Caco-2 (cell line): ENCODE measurements at regions of chr10 and their contacts with region 1.

Region 1: GRCh38 chr10:11874542-11875177 is 51.5 kb downstream of the PROSER2 start:
- DNase-seq: peak; percentile 95
- H3K4me3 ChIP-seq: peak overlapping the region; percentile 29
- H3K4me3 Mint-ChIP-seq: peak overlapping the region; percentile 72
- H3K27ac Mint-ChIP-seq: peak overlapping the region; percentile 97
- H3K4me1 ChIP-seq: peaks cover 59% of the 10 kb centered on the region
- H3K4me1 Mint-ChIP-seq: peaks cover 67% of the 10 kb centered on the region
- H3K27me3 ChIP-seq: no peaks in the 10 kb centered on the region
- H3K27me3 Mint-ChIP-seq: no peaks in the 10 kb centered on the region
- CTCF ChIP-seq: no peak

Region 2: DNA sequence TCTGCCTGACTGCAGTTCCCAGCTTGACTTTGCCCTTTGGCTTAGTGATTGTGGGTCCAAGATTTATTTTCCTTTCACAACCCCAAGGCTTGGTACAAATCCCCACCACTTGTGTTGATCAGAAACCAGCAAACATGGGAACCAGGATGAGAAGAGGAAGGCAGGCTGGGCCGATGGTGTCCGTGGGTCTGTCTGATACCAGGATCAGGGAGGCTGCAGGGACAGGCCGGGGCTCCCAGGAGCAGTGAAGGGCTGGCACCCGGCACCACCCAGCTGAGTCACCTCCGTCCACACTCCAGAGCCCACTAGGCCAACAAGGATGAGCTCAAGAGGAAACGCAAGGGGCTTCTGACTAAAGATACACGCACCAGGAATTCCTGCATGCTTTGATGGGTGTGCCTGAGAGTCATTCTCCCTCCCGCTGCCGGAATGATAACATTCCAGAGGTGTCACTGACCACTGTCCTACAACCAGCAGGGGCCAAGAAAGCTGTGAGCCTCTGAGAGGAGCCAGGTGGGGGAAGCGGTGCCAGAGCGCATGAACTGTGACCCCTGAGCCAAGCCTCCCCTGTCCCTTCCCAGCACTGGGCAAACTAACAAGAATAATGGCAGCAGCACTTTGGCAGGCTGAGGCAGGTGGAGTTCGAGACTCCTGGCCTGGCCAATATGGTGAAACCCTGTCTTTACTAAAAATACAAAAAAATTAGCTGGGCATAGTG is 80.7 kb before region 1 on chr10:
- CTCF ChIA-PET with region 1: interaction called, 7 read pairs
- POLR2A ChIA-PET with region 1: interaction called, 39 read pairs
- intact Hi-C with region 1: loop called (anchors 1 kb)
- DNase-seq: peak; percentile 92 to 98
- H3K4me3 ChIP-seq: no peak overlapping the region; the same call in 1 of the 2 replicates
- H3K4me3 Mint-ChIP-seq: peak overlapping the region; percentile 56
- H3K27ac Mint-ChIP-seq: peak overlapping the region; percentile 92
- H3K4me1 ChIP-seq: peaks cover 38% of the 10 kb centered on the region
- H3K4me1 Mint-ChIP-seq: peaks cover 46% of the 10 kb centered on the region
- H3K27me3 ChIP-seq: no peaks in the 10 kb centered on the region
- H3K27me3 Mint-ChIP-seq: no peaks in the 10 kb centered on the region
- CTCF ChIP-seq: peak; percentile 21 to 26

Region 3: GRCh38 chr10:11830836-11831519 is 43.7 kb before region 1 on chr10:
- CTCF ChIA-PET with region 1: interaction called, 3 read pairs
- POLR2A ChIA-PET with region 1: interaction called, 30 read pairs
- intact Hi-C with region 1: loop called (anchors 1 kb)
- DNase-seq: peak; percentile 83 to 89
- H3K4me3 ChIP-seq: no peak overlapping the region
- H3K4me3 Mint-ChIP-seq: peak overlapping the region; percentile 71
- H3K27ac Mint-ChIP-seq: peak overlapping the region; percentile 91
- H3K4me1 ChIP-seq: peaks cover 69% of the 10 kb centered on the region
- H3K4me1 Mint-ChIP-seq: peaks cover 46% of the 10 kb centered on the region
- H3K27me3 ChIP-seq: no peaks in the 10 kb centered on the region
- H3K27me3 Mint-ChIP-seq: no peaks in the 10 kb centered on the region
- CTCF ChIP-seq: no peak

Region 4: DNA sequence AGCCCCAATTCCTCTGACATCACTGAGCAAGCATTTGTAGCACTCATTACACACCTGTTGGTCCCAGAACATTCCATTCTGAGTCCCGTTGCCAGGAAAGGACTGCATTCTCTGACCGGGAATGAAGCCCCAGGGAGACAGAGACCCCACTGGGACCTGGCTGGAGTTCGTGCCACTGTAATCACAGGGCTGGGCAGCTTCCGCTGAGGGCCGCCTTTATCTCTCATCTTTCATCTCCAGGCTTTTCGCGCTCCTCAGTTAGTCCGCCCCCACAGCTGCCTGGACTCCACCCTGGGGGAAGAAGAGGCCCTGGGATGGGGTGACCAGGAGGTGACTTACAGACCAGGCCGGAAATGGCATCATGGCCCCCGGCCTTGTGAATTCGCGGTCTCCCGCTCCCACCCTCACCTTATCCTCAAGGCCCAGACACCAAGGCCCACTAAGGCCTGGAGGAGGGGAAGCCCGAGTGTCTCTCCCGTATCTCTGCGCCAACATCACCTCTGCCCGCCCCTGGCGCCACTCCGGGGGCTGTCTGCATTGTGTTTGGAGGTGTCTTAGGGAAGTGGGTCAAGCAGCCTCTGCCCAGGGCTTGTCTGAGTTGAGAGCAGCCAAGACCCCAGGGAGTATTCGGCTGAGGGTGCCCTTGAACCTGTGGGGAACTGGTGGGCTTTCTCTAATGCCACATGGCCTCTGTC is 23.9 kb after region 1 on chr10:
- CTCF ChIA-PET with region 1: interaction called, 5 read pairs
- POLR2A ChIA-PET with region 1: interaction called, 13 read pairs
- intact Hi-C with region 1: loop called (anchors 1 kb)
- DNase-seq: peak; percentile 78 to 89
- H3K4me3 ChIP-seq: no peak overlapping the region
- H3K4me3 Mint-ChIP-seq: no peak overlapping the region
- H3K27ac Mint-ChIP-seq: peak overlapping the region; percentile 86
- H3K4me1 ChIP-seq: peaks cover 25% of the 10 kb centered on the region
- H3K4me1 Mint-ChIP-seq: peaks cover 39% of the 10 kb centered on the region
- H3K27me3 ChIP-seq: no peaks in the 10 kb centered on the region
- H3K27me3 Mint-ChIP-seq: no peaks in the 10 kb centered on the region
- CTCF ChIP-seq: no peak

Region 5: DNA sequence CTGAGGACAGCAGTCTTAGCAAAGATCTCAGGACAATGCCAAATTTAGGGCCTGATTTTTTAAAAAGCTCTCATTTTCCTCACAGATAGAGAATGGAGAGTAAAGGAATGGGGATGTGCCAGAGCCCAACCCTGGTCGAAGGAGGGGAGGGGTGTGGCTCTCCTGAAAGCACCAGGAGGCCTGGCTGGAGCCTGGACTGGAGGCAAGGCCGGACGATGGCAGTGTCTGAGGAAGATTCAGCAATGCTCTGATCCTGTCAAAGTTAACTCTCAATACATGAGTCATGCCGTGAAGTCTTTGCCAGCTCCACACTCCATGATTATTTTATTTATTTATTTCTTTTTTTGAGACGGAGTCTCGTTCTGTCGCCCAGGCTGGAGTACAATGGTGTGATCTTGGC is 59.6 kb after region 1 on chr10:
- CTCF ChIA-PET with region 1: no interaction called
- POLR2A ChIA-PET with region 1: interaction called, 9 read pairs
- intact Hi-C with region 1: loop called (anchors 2 kb)
- DNase-seq: no peak
- H3K4me3 ChIP-seq: no peak overlapping the region
- H3K4me3 Mint-ChIP-seq: no peak overlapping the region
- H3K27ac Mint-ChIP-seq: peak overlapping the region; percentile 10
- H3K4me1 ChIP-seq: peaks cover 19% of the 10 kb centered on the region
- H3K4me1 Mint-ChIP-seq: peaks cover 28% of the 10 kb centered on the region
- H3K27me3 ChIP-seq: no peaks in the 10 kb centered on the region
- H3K27me3 Mint-ChIP-seq: no peaks in the 10 kb centered on the region
- CTCF ChIP-seq: no peak

Region 6: GRCh38 chr10:11986593-11987216 is 112.0 kb after region 1 on chr10:
- CTCF ChIA-PET with region 1: no interaction called
- POLR2A ChIA-PET with region 1: interaction called, 3 read pairs
- intact Hi-C with region 1: loop called (anchors 1 kb)
- DNase-seq: peak; percentile 82 to 91
- H3K4me3 ChIP-seq: no peak overlapping the region
- H3K4me3 Mint-ChIP-seq: peak overlapping the region; percentile 20
- H3K27ac Mint-ChIP-seq: peak overlapping the region; percentile 20
- H3K4me1 ChIP-seq: peaks cover 11% of the 10 kb centered on the region
- H3K4me1 Mint-ChIP-seq: peaks cover 12% of the 10 kb centered on the region
- H3K27me3 ChIP-seq: no peaks in the 10 kb centered on the region
- H3K27me3 Mint-ChIP-seq: no peaks in the 10 kb centered on the region
- CTCF ChIP-seq: peak; percentile 96

Region 7: DNA sequence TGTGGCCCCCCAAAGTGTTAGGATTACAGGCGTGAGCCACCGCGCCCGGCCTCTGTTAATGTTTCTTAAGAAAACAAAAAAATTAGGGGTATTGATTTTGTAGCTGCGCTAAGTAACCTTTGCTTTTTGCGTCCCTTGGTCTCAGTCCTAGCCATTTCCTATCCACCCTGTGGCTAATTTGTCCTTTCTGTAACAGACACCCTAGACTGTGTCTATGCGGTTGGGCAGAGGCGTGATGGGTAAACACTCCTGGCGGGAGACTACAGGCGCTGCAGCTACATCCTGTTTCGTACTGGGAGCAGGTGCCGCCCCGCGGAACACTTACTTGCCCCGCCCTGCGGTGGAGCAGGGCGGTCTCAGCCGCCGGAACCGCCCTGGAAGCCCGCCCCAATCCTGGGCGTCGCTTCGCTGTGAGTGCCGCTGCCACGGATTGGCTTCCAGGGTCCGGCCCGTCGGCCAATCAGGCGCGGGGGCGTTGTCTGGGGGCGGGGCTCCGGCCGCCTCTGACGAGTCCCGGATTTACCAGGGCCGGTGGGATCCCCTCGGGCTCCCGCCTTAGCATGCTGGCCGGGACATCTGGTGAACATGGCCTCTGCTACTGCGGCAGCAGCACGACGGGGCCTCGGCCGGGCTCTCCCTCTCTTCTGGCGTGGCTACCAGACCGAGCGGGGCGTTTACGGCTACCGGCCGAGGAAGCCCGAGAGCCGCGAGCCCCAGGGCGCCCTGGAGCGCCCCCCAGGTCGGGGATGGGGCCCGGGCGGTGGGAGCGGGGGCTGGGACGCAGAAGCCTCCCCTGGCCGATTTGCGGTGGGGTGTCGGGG is 194.0 kb after region 1 on chr10 and contains the start of gene DHTKD1:
- CTCF ChIA-PET with region 1: no interaction called
- POLR2A ChIA-PET with region 1: no interaction called
- intact Hi-C with region 1: loop called (anchors 2 kb)
- DNase-seq: peak; percentile 99 to 100
- H3K4me3 ChIP-seq: peak within 1 kb of the TSS; percentile 77
- H3K4me3 Mint-ChIP-seq: peak within 1 kb of the TSS; percentile 63
- H3K27ac Mint-ChIP-seq: peak within 1 kb of the TSS; percentile 66
- H3K4me1 ChIP-seq: peaks cover 9% of the 10 kb centered on the region; the same call in 1 of the 2 replicates
- H3K4me1 Mint-ChIP-seq: peaks cover 11% of the 10 kb centered on the region
- H3K27me3 ChIP-seq: no peaks in the 10 kb centered on the region
- H3K27me3 Mint-ChIP-seq: no peaks in the 10 kb centered on the region
- CTCF ChIP-seq: peak in 1 of 2 experiments; percentile 61
- total RNA-seq, gene DHTKD1: 57.8 and 61.4 TPM in 2 replicates

Region 8: DNA sequence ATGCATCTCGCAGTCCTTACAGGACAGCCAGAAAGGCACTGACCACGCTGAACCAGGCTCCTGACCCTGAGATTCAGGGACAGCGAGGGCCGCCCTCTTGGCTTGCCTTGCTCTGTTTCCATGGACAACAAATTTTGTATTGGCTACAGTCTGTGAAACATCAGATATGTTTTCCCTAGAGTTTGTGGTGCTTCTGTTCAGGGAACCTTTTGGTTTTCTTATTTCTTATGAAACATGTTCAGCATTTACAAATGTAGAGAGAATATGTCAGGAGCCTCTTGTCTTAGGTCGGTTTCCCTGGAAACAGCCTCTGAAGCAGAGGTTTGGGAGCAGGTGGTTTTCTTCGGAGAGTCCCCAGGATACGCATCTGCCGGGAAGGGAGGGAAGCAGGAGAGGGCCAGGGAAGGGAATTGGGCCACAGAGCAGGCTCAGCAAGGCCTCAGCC is 866.7 kb after region 1 on chr10:
- CTCF ChIA-PET with region 1: no interaction called
- POLR2A ChIA-PET with region 1: no interaction called
- intact Hi-C with region 1: no loop called
- DNase-seq: no peak
- H3K4me3 ChIP-seq: no peak overlapping the region
- H3K4me3 Mint-ChIP-seq: no peak overlapping the region
- H3K27ac Mint-ChIP-seq: no peak overlapping the region
- H3K4me1 ChIP-seq: no peaks in the 10 kb centered on the region
- H3K4me1 Mint-ChIP-seq: no peaks in the 10 kb centered on the region
- H3K27me3 ChIP-seq: no peaks in the 10 kb centered on the region
- H3K27me3 Mint-ChIP-seq: no peaks in the 10 kb centered on the region
- CTCF ChIP-seq: no peak